ENCODE measurements at regions of chr11 and their contacts with region 1.

Region 1: GRCh38 chr11:64185816-64186498 is at the start of gene STIP1:
- DNase-seq: peak; percentile 96 to 100 (median 98)
- ATAC-seq: peak; percentile 87
- H3K4me3 ChIP-seq: peak within 1 kb of the TSS; percentile 79 to 88
- H3K4me3 Mint-ChIP-seq: peak within 1 kb of the TSS; percentile 96
- H3K27ac ChIP-seq: peak within 1 kb of the TSS; percentile 57 to 85
- H3K27ac Mint-ChIP-seq: peak within 1 kb of the TSS; percentile 97
- H3K4me1 ChIP-seq: peaks cover 39% of the 10 kb centered on the region
- H3K4me1 Mint-ChIP-seq: peaks cover 43% of the 10 kb centered on the region
- H3K27me3 ChIP-seq: no peaks in the 10 kb centered on the region
- H3K27me3 Mint-ChIP-seq: no peaks in the 10 kb centered on the region
- CTCF ChIP-seq: peak; percentile 36
- total RNA-seq, gene STIP1: 37.0 to 37.7 TPM

Region 2: DNA sequence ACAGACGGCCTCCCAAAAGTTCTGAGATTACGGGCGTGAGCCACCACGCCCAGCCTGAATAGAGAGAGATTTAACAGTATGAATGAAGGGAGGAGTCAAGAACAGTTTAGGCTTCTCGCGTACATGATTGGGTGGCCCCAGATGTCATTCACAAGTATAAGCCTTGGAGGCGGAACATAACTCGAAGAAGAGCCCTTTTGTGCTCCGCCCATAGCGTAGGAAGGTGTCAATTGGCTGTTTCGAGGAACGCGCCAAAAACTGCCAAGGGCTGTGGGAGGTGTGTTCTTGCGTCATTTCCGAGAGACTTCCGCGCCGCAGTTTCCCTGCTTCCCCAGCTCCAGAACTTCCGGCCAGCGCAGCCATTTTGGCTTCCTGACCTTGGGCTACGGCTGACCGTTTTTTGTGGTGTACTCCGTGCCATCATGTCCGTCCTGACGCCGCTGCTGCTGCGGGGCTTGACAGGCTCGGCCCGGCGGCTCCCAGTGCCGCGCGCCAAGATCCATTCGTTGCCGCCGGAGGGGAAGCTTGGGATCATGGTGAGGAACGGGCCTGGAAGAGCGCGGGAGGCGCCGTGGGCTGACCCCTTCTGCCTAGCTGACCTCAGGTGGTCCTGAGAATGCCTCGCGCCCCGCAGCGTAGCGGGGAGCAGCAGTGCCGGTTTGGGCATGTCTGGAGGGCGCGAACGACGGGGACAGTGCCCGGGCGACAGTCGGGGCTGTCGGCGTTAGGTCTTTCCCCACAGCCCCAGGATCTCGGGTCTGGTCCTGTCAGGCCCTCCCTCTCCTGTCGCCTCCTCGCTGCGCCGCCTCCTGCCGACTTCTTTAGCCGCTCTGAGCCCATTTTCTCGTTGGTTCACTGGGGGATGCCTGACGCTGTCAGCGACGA is 211.5 kb before region 1 on chr11 and contains the start of gene COX8A:
- CTCF ChIA-PET with region 1: no interaction called
- POLR2A ChIA-PET with region 1: no interaction called
- intact Hi-C with region 1: loop called (anchors 1 kb)
- DNase-seq: peak; percentile 89 to 100 (median 90)
- ATAC-seq: peak; percentile 99
- H3K4me3 ChIP-seq: peak within 1 kb of the TSS; percentile 97 to 99
- H3K4me3 Mint-ChIP-seq: peak within 1 kb of the TSS; percentile 100
- H3K27ac ChIP-seq: peak within 1 kb of the TSS; percentile 86 to 97
- H3K27ac Mint-ChIP-seq: peak within 1 kb of the TSS; percentile 99
- H3K4me1 ChIP-seq: peaks cover 16% of the 10 kb centered on the region
- H3K4me1 Mint-ChIP-seq: peaks cover 30% of the 10 kb centered on the region
- H3K27me3 ChIP-seq: no peaks in the 10 kb centered on the region
- H3K27me3 Mint-ChIP-seq: peaks cover 3% of the 10 kb centered on the region
- CTCF ChIP-seq: no peak
- total RNA-seq, gene COX8A: 97.6 to 111 TPM

Region 3: DNA sequence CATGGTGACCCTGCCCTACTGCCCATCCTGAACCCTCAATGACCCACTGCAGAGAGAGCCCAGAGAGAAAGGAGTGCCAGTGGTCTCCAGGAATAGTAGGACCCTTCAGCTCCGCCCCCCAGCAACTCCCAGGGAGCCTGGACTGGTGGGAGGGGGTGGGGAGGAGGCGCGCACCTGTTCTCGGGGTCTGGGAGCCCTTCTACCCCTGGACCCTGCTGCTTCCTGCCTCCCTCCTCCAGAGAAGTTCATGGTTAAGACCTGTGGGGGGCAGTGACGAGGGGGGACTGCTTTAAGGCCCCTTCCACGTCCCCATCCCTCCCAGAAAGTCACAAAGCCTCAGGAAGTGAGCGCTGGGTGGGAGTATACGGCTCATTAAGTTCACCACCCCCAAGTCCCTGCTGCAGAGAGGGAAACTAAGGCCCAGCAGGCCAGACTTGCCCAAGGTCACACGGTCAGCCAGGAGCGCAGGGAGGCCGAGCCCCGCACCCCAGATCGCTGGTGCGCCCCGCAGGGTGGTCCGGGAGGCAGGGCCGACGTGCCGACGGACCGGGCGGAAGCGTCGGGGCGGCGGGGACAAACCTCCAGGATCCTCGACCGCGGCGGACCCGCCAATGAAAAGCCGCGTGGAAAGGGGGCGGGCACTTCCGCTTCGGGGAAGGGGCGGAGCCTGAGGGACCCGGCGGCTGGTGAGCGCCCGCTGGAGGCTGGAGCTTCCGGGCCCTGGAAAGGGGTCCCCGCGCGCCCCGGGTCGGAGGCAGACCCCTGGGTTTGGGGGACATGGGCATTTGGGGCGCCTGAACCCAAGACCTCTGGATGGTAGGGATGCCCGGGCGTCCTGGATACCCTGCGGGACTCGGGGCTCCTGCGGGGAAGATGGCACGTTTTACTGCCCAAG is 39.9 kb after region 1 on chr11 and contains the starts of genes NUDT22 and TRPT1:
- CTCF ChIA-PET with region 1: interaction called, 6 read pairs
- POLR2A ChIA-PET with region 1: interaction called, 6 read pairs
- intact Hi-C with region 1: loop called (anchors 1 kb)
- DNase-seq: peak; percentile 75 to 96 (median 93)
- ATAC-seq: peak; percentile 65
- H3K4me3 ChIP-seq: peak within 1 kb of the TSS; percentile 76 to 100
- H3K4me3 Mint-ChIP-seq: peak within 1 kb of the TSS; percentile 93
- H3K27ac ChIP-seq: peak within 1 kb of the TSS; percentile 85 to 88
- H3K27ac Mint-ChIP-seq: peak within 1 kb of the TSS; percentile 91
- H3K4me1 ChIP-seq: peaks cover 41% of the 10 kb centered on the region
- H3K4me1 Mint-ChIP-seq: peaks cover 30% of the 10 kb centered on the region
- H3K27me3 ChIP-seq: no peaks in the 10 kb centered on the region
- H3K27me3 Mint-ChIP-seq: no peaks in the 10 kb centered on the region
- CTCF ChIP-seq: peak; percentile 58
- total RNA-seq, gene NUDT22: 20.1 to 23.6 TPM
- total RNA-seq, gene TRPT1: 12.3 to 14.3 TPM

Region 4: GRCh38 chr11:64269380-64270234 is 83.7 kb after region 1 on chr11:
- CTCF ChIA-PET with region 1: interaction called, 3 read pairs
- POLR2A ChIA-PET with region 1: interaction called, 5 read pairs
- intact Hi-C with region 1: loop called (anchors 1 kb)
- DNase-seq: peak; percentile 94 to 99 (median 97)
- ATAC-seq: peak; percentile 64
- H3K4me3 ChIP-seq: peak overlapping the region; percentile 79 to 81
- H3K4me3 Mint-ChIP-seq: peak overlapping the region; percentile 95
- H3K27ac ChIP-seq: peak overlapping the region; percentile 69 to 99
- H3K27ac Mint-ChIP-seq: peak overlapping the region; percentile 94
- H3K4me1 ChIP-seq: peaks cover 24% of the 10 kb centered on the region
- H3K4me1 Mint-ChIP-seq: peaks cover 27% of the 10 kb centered on the region
- H3K27me3 ChIP-seq: no peaks in the 10 kb centered on the region
- H3K27me3 Mint-ChIP-seq: no peaks in the 10 kb centered on the region
- CTCF ChIP-seq: peak; percentile 40

Region 5: DNA sequence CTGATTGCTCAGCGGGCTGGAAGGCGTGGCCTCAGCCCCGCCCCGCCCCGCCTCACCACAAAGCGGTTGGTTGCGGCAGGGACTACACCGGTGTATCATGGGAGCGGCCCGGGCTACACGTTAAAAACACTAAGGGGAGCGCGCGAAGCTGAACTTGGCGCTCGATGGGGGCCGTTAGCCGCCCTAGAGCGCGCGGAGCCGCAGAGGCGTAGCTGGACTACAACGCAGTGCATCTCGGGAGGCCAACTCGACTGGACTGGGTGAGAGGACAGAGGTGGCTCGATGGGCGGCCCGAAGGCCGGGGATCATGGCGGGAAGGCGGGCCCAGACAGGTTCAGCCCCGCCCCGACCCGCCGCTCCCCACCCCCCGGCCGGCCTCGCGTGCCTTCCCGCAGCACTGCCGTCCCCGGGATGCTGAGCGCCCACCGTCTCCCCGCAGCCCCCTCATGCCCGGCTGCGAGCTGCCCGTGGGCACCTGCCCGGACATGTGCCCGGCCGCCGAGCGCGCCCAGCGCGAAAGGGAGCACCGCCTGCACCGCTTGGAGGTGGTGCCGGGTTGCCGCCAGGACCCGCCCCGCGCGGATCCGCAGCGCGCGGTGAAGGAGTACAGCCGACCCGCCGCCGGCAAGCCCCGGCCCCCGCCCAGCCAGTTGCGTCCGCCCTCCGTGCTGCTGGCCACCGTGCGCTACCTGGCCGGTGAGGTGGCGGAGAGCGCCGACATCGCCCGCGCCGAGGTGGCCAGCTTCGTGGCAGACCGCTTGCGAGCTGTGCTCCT is 855.1 kb after region 1 on chr11 and contains the start of gene SAC3D1:
- CTCF ChIA-PET with region 1: no interaction called
- POLR2A ChIA-PET with region 1: no interaction called
- intact Hi-C with region 1: loop called in 1 of 2 experiments (anchors 5 kb)
- DNase-seq: peak; percentile 67 to 94 (median 85)
- ATAC-seq: peak; percentile 90
- H3K4me3 ChIP-seq: peak within 1 kb of the TSS; percentile 63 to 76
- H3K4me3 Mint-ChIP-seq: peak within 1 kb of the TSS; percentile 93
- H3K27ac ChIP-seq: peak within 1 kb of the TSS; percentile 34 to 82
- H3K27ac Mint-ChIP-seq: peak within 1 kb of the TSS; percentile 91
- H3K4me1 ChIP-seq: peaks cover 17% of the 10 kb centered on the region
- H3K4me1 Mint-ChIP-seq: peaks cover 15% of the 10 kb centered on the region
- H3K27me3 ChIP-seq: no peaks in the 10 kb centered on the region
- H3K27me3 Mint-ChIP-seq: no peaks in the 10 kb centered on the region
- CTCF ChIP-seq: no peak
- total RNA-seq, gene SAC3D1: 0.57 to 0.94 TPM

Measured in CD8-positive, alpha-beta T cell (primary cell).